B cell (primary cell): ENCODE measurements at regions of chr3 and their contacts with region 1.

Region 1: GRCh38 chr3:46976326-46977190 is at the start of gene CCDC12:
- DNase-seq: peak; percentile 98
- ATAC-seq: peak; percentile 75
- H3K4me3 ChIP-seq: peak within 1 kb of the TSS; percentile 63 to 91 (median 85)
- H3K4me3 Mint-ChIP-seq: peak within 1 kb of the TSS; percentile 96
- H3K27ac ChIP-seq: peak within 1 kb of the TSS; percentile 75 to 88
- H3K27ac Mint-ChIP-seq: peak within 1 kb of the TSS; percentile 97
- H3K4me1 ChIP-seq: peaks cover 69 to 87% of the 10 kb centered on the region in 2 donors
- H3K4me1 Mint-ChIP-seq: peaks cover 69% of the 10 kb centered on the region
- H3K27me3 ChIP-seq: no peaks in the 10 kb centered on the region
- H3K27me3 Mint-ChIP-seq: no peaks in the 10 kb centered on the region
- CTCF ChIP-seq: no peak
- total RNA-seq, gene CCDC12: 97.3 and 99.0 TPM in 2 replicates

Region 2: DNA sequence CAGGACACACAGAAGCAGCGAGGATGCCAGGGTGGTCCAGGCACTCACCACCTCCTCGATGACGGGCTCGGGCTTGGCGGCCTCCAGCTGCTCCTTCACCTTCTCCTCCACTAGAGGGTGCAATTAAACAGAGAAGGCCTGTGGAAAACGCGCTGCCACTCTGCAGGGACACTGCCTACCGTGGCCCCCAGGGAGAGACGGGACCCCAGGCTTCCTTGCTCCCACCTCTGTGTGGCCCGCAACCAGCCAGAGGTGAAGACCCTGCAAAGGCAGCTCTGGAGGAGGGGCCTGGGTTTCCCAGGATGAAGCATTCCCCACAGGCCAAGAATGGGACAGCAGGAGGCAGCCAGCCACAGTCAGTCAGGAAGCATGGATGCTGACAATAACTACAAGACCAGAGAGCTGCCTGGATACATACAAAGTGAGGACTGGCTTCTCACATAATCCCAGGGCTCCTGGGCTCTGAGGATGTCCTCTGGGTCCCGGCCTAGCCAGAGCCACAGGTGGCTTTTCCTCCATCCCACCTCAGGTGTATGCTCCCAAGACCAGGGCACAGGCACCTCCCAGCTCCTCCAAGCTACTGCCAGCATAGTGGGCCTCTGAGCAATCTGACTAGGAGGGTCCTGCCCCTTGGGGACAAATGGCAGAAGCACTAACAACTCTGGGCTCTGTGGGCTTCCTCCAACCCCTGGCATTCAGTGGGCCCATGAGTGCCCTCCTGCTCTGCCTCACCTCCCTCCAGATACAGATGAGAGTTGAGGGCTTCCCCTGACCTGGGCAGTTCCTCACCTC is 52.8 kb before region 1 on chr3:
- CTCF ChIA-PET with region 1: interaction called, 7 read pairs
- POLR2A ChIA-PET with region 1: interaction called, 15 read pairs
- intact Hi-C with region 1: loop called (anchors 1 kb)
- DNase-seq: peak; percentile 66
- ATAC-seq: no peak
- H3K4me3 ChIP-seq: no peak overlapping the region
- H3K4me3 Mint-ChIP-seq: peak overlapping the region; percentile 21
- H3K27ac ChIP-seq: peak overlapping the region; percentile 85 to 92
- H3K27ac Mint-ChIP-seq: peak overlapping the region; percentile 83
- H3K4me1 ChIP-seq: peaks cover 57 to 59% of the 10 kb centered on the region in 2 donors
- H3K4me1 Mint-ChIP-seq: peaks cover 60% of the 10 kb centered on the region
- H3K27me3 ChIP-seq: no peaks in the 10 kb centered on the region
- H3K27me3 Mint-ChIP-seq: no peaks in the 10 kb centered on the region
- CTCF ChIP-seq: peak; percentile 70

Region 3: DNA sequence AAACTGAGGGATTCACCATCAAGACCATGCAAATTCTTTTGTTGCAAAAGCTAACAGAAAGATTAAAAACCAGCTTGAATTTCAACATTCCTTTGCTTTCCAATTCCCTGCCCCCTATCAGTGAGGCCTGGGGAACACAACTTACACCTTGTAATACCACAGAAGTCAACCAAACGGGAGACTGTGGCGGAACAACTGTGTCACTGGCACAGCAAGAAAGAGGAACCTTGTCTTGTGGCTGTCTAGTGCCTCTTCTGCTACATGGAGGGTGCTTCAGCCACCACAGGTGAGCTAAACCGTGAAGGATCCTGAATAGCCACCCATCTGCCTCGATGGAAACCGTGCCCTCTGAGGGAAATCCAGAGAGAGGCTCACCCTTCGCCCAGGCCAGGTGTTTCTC is 11.4 kb before region 1 on chr3:
- CTCF ChIA-PET with region 1: interaction called, 4 read pairs
- POLR2A ChIA-PET with region 1: interaction called, 6 read pairs
- intact Hi-C with region 1: loop called (anchors 1 kb)
- DNase-seq: peak; percentile 71
- ATAC-seq: peak; percentile 91
- H3K4me3 ChIP-seq: no peak overlapping the region
- H3K4me3 Mint-ChIP-seq: peak overlapping the region; percentile 63
- H3K27ac ChIP-seq: peak overlapping the region in 1 of 2 donors; percentile 57
- H3K27ac Mint-ChIP-seq: peak overlapping the region; percentile 92
- H3K4me1 ChIP-seq: peaks cover 73 to 74% of the 10 kb centered on the region in 2 donors
- H3K4me1 Mint-ChIP-seq: peaks cover 78% of the 10 kb centered on the region
- H3K27me3 ChIP-seq: no peaks in the 10 kb centered on the region
- H3K27me3 Mint-ChIP-seq: no peaks in the 10 kb centered on the region
- CTCF ChIP-seq: no peak

Region 4: GRCh38 chr3:46998121-46998851 is 21.7 kb after region 1 on chr3:
- CTCF ChIA-PET with region 1: interaction called, 21 read pairs
- POLR2A ChIA-PET with region 1: no interaction called
- intact Hi-C with region 1: no loop called
- DNase-seq: peak; percentile 79
- ATAC-seq: peak; percentile 88
- H3K4me3 ChIP-seq: no peak overlapping the region
- H3K4me3 Mint-ChIP-seq: no peak overlapping the region
- H3K27ac ChIP-seq: no peak overlapping the region
- H3K27ac Mint-ChIP-seq: no peak overlapping the region
- H3K4me1 ChIP-seq: peaks cover 3 to 16% of the 10 kb centered on the region in 2 donors
- H3K4me1 Mint-ChIP-seq: peaks cover 10% of the 10 kb centered on the region
- H3K27me3 ChIP-seq: no peaks in the 10 kb centered on the region
- H3K27me3 Mint-ChIP-seq: no peaks in the 10 kb centered on the region
- CTCF ChIP-seq: peak; percentile 84

Region 5: GRCh38 chr3:47065681-47066080 is 89.1 kb after region 1 on chr3:
- CTCF ChIA-PET with region 1: no interaction called
- POLR2A ChIA-PET with region 1: no interaction called
- intact Hi-C with region 1: no loop called
- DNase-seq: no peak
- ATAC-seq: no peak
- H3K4me3 ChIP-seq: no peak overlapping the region
- H3K4me3 Mint-ChIP-seq: no peak overlapping the region
- H3K27ac ChIP-seq: no peak overlapping the region
- H3K27ac Mint-ChIP-seq: no peak overlapping the region
- H3K4me1 ChIP-seq: no peaks in the 10 kb centered on the region
- H3K4me1 Mint-ChIP-seq: peaks cover 4% of the 10 kb centered on the region
- H3K27me3 ChIP-seq: no peaks in the 10 kb centered on the region
- H3K27me3 Mint-ChIP-seq: no peaks in the 10 kb centered on the region
- CTCF ChIP-seq: no peak

Region 6: DNA sequence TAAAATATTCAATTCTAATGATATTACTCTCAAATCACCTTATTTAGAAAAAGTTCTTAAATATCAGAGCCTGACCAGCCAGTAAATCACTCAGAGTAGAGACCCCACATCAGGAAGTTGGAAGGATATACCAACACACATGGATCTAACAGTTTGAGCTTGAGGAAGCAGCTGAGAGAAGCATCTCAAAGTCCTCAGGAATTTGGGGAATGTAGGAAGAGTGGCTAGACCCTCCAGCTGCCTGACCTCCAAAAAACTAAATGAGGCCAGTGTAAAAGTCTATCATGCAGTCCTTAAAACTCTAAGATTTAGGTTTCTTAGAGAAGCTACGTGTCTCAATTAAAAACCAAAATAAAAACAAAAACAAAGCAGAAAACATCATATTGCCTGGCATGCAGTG is 132.0 kb after region 1 on chr3:
- CTCF ChIA-PET with region 1: no interaction called
- POLR2A ChIA-PET with region 1: no interaction called
- intact Hi-C with region 1: no loop called
- DNase-seq: no peak
- ATAC-seq: no peak
- H3K4me3 ChIP-seq: no peak overlapping the region
- H3K4me3 Mint-ChIP-seq: no peak overlapping the region
- H3K27ac ChIP-seq: peak overlapping the region in 1 of 2 donors; percentile 39
- H3K27ac Mint-ChIP-seq: no peak overlapping the region
- H3K4me1 ChIP-seq: peaks cover 2 to 3% of the 10 kb centered on the region in 2 donors
- H3K4me1 Mint-ChIP-seq: peaks cover 1% of the 10 kb centered on the region
- H3K27me3 ChIP-seq: no peaks in the 10 kb centered on the region
- H3K27me3 Mint-ChIP-seq: no peaks in the 10 kb centered on the region
- CTCF ChIP-seq: no peak

Region 7: GRCh38 chr3:47164007-47164881 is 187.7 kb after region 1 on chr3 and contains the start of gene SETD2:
- CTCF ChIA-PET with region 1: no interaction called
- POLR2A ChIA-PET with region 1: interaction called, 6 read pairs
- intact Hi-C with region 1: loop called (anchors 5 kb)
- DNase-seq: peak; percentile 92
- ATAC-seq: peak; percentile 85
- H3K4me3 ChIP-seq: peak within 1 kb of the TSS; percentile 77 to 94 (median 90)
- H3K4me3 Mint-ChIP-seq: peak within 1 kb of the TSS; percentile 96
- H3K27ac ChIP-seq: peak within 1 kb of the TSS; percentile 72 to 93
- H3K27ac Mint-ChIP-seq: peak within 1 kb of the TSS; percentile 97
- H3K4me1 ChIP-seq: peaks cover 33 to 44% of the 10 kb centered on the region in 2 donors
- H3K4me1 Mint-ChIP-seq: peaks cover 43% of the 10 kb centered on the region
- H3K27me3 ChIP-seq: no peaks in the 10 kb centered on the region
- H3K27me3 Mint-ChIP-seq: no peaks in the 10 kb centered on the region
- CTCF ChIP-seq: peak; percentile 51
- total RNA-seq, gene SETD2: 91.4 and 98.9 TPM in 2 replicates

Region 8: GRCh38 chr3:47380601-47381316 is 404.2 kb after region 1 on chr3 and contains the start of gene PTPN23:
- CTCF ChIA-PET with region 1: no interaction called
- POLR2A ChIA-PET with region 1: interaction called, 5 read pairs
- intact Hi-C with region 1: loop called (anchors 1 kb)
- DNase-seq: peak; percentile 99
- ATAC-seq: peak; percentile 81
- H3K4me3 ChIP-seq: peak within 1 kb of the TSS; percentile 61 to 96 (median 91)
- H3K4me3 Mint-ChIP-seq: peak within 1 kb of the TSS; percentile 100
- H3K27ac ChIP-seq: peak within 1 kb of the TSS; percentile 93 to 95
- H3K27ac Mint-ChIP-seq: peak within 1 kb of the TSS; percentile 99
- H3K4me1 ChIP-seq: peaks cover 21 to 31% of the 10 kb centered on the region in 2 donors
- H3K4me1 Mint-ChIP-seq: peaks cover 53% of the 10 kb centered on the region
- H3K27me3 ChIP-seq: no peaks in the 10 kb centered on the region
- H3K27me3 Mint-ChIP-seq: no peaks in the 10 kb centered on the region
- CTCF ChIP-seq: no peak
- total RNA-seq, gene PTPN23: 68.8 TPM in 2 replicates

Region 9: DNA sequence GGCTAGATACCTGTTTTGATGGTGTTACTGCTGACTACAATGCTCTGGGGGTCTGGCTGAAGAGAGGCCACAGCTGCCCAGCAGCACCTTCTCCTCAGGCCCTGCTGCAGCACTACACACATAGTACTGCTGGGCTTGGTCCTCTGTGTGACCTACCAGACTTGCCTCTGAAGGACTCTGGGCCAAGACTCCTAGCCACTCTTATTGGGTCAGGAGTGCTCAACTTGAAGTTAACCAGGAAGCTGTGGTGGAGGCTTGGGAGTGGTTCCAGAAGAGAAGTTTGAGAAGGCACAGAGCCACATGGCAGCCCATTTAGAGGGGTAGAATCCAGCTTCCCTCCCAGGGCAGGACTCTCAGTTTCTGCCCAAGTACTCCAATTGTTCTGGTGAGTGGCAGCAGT is 520.3 kb after region 1 on chr3:
- CTCF ChIA-PET with region 1: no interaction called
- POLR2A ChIA-PET with region 1: no interaction called
- intact Hi-C with region 1: no loop called
- DNase-seq: no peak
- ATAC-seq: no peak
- H3K4me3 ChIP-seq: no peak overlapping the region
- H3K4me3 Mint-ChIP-seq: no peak overlapping the region
- H3K27ac ChIP-seq: no peak overlapping the region
- H3K27ac Mint-ChIP-seq: no peak overlapping the region
- H3K4me1 ChIP-seq: peaks cover 14 to 15% of the 10 kb centered on the region in 2 donors
- H3K4me1 Mint-ChIP-seq: peaks cover 15% of the 10 kb centered on the region
- H3K27me3 ChIP-seq: no peaks in the 10 kb centered on the region
- H3K27me3 Mint-ChIP-seq: no peaks in the 10 kb centered on the region
- CTCF ChIP-seq: no peak